MCF 10A (cell line): ENCODE measurements at regions of chr3 and their contacts with region 1.

Region 1: DNA sequence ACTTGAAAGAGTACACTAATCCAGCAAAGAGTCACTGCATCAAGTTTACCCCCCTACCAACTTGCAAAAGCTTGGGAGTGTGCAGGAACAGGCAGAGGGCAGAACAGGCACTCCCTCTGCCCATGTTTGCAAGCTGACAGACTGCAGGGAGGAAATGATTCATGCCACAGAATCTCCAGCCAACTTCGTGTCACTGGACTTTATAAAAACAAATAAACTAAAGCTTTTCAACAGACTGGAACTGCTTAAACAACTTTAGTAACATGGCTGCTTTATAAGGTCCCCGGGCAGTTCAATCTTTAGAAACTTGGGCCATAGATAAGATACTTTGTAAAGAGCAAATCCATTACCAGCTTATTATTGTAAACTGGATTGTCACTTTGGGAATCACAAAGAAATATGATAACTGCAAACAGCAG is 129.4 kb downstream of the THRB start:
- DNase-seq: peak; percentile 95
- H3K4me3 Mint-ChIP-seq: peak overlapping the region; percentile 21
- H3K27ac Mint-ChIP-seq: peak overlapping the region; percentile 87
- H3K4me1 Mint-ChIP-seq: peaks cover 21% of the 10 kb centered on the region
- H3K27me3 Mint-ChIP-seq: no peaks in the 10 kb centered on the region
- CTCF ChIP-seq: no peak

Region 2: GRCh38 chr3:24264748-24265158 is 100.5 kb before region 1 on chr3:
- CTCF ChIA-PET with region 1: interaction called, 3 read pairs
- POLR2A ChIA-PET with region 1: no interaction called
- intact Hi-C with region 1: loop called (anchors 10 kb)
- DNase-seq: peak; percentile 53
- H3K4me3 Mint-ChIP-seq: no peak overlapping the region
- H3K27ac Mint-ChIP-seq: no peak overlapping the region
- H3K4me1 Mint-ChIP-seq: peaks cover 5% of the 10 kb centered on the region
- H3K27me3 Mint-ChIP-seq: no peaks in the 10 kb centered on the region
- CTCF ChIP-seq: peak; percentile 71

Region 3: DNA sequence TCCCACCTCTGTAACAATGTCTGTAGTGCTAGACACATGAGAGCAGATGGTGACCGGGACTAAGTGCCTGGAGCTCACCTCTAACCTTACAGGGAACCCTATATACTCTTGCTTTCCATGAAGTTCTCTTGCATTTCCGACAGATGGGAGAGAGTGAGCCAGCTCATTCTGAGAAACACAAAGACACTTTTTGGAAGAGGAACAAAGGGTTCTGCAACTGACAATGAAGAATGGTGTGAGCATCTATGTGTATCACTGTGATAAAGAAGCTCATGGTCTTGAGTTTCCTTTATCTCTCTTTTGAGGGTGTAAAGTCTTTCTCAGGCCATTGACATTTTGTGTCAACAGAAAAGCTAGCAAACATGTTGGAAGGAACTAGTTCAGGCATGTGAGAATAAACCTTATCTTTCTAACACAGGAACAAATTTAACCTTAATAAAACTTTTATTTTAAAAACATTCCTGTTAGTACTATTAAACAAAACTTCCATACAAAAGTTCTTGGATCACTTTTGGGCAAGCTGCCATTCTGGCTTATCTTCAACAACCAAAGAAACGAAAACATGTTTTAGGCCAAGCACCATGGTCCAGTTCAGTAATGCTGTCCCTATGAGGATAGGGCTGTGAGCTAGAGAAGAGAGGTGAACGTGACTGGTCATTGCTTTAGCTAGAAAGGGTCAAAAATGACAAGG is 13.3 kb before region 1 on chr3:
- CTCF ChIA-PET with region 1: no interaction called
- POLR2A ChIA-PET with region 1: interaction called, 10 read pairs
- intact Hi-C with region 1: no loop called
- DNase-seq: no peak
- H3K4me3 Mint-ChIP-seq: no peak overlapping the region
- H3K27ac Mint-ChIP-seq: peak overlapping the region; percentile 44
- H3K4me1 Mint-ChIP-seq: peaks cover 24% of the 10 kb centered on the region
- H3K27me3 Mint-ChIP-seq: no peaks in the 10 kb centered on the region
- CTCF ChIP-seq: no peak

Region 4: GRCh38 chr3:24410861-24411260 is 45.7 kb after region 1 on chr3:
- CTCF ChIA-PET with region 1: no interaction called
- POLR2A ChIA-PET with region 1: no interaction called
- intact Hi-C with region 1: no loop called
- DNase-seq: no peak
- H3K4me3 Mint-ChIP-seq: no peak overlapping the region
- H3K27ac Mint-ChIP-seq: no peak overlapping the region
- H3K4me1 Mint-ChIP-seq: no peaks in the 10 kb centered on the region
- H3K27me3 Mint-ChIP-seq: no peaks in the 10 kb centered on the region
- CTCF ChIP-seq: no peak

Region 5: DNA sequence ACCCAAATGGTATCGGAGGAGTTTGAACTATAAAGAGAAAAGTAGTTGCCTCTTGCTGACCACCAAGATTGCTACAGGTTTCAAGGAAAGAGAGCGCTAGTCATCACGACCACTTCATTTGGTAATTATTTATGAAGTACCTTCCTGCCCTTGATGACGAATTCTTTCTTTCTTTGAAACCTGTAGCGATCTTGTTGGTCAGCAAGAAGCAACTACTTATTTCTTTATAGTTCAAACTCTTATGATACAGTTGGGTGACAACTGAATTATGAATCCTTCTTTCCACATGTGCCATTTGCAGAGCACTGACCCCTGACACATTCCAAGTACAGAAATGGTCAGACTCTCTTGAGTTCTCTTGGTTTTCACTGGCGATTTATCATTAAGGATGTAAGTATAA is 82.6 kb after region 1 on chr3:
- CTCF ChIA-PET with region 1: no interaction called
- POLR2A ChIA-PET with region 1: no interaction called
- intact Hi-C with region 1: no loop called
- DNase-seq: no peak
- H3K4me3 Mint-ChIP-seq: no peak overlapping the region
- H3K27ac Mint-ChIP-seq: no peak overlapping the region
- H3K4me1 Mint-ChIP-seq: no peaks in the 10 kb centered on the region
- H3K27me3 Mint-ChIP-seq: no peaks in the 10 kb centered on the region
- CTCF ChIP-seq: no peak

Region 6: GRCh38 chr3:24494618-24495325 is 129.6 kb after region 1 on chr3 and contains the start of gene THRB:
- CTCF ChIA-PET with region 1: interaction called, 3 read pairs
- POLR2A ChIA-PET with region 1: interaction called, 6 read pairs
- intact Hi-C with region 1: loop called (anchors 2 kb)
- DNase-seq: peak; percentile 60
- H3K4me3 Mint-ChIP-seq: peak within 1 kb of the TSS; percentile 94
- H3K27ac Mint-ChIP-seq: peak within 1 kb of the TSS; percentile 87
- H3K4me1 Mint-ChIP-seq: peaks cover 16% of the 10 kb centered on the region
- H3K27me3 Mint-ChIP-seq: no peaks in the 10 kb centered on the region
- CTCF ChIP-seq: no peak
- total RNA-seq, gene THRB: 3.8 and 4.2 TPM in 2 replicates